Activated CD8-positive, alpha-beta T cell treated with anti-CD3 and anti-CD28 coated beads, Interleukin-2, amount 10 ng/mL, durations not matched to agents 7 days and 5 days (primary cell): ENCODE measurements at regions of chr11 and their contacts with region 1.

Region 1: GRCh38 chr11:93529707-93530467 is 13.3 kb downstream of the SMCO4 start:
- DNase-seq: no peak
- ATAC-seq: peak; percentile 37
- H3K4me3 Mint-ChIP-seq: no peak overlapping the region
- H3K27ac Mint-ChIP-seq: peak overlapping the region; percentile 71
- H3K4me1 Mint-ChIP-seq: peaks cover 79% of the 10 kb centered on the region
- H3K27me3 Mint-ChIP-seq: no peaks in the 10 kb centered on the region

Region 2: GRCh38 chr11:93543292-93543977 is 13.5 kb after region 1 on chr11 and contains the start of gene SMCO4:
- CTCF ChIA-PET with region 1: interaction called, 16 read pairs
- POLR2A ChIA-PET with region 1: interaction called, 7 read pairs
- DNase-seq: peak; percentile 71
- ATAC-seq: peak; percentile 90
- H3K4me3 Mint-ChIP-seq: peak within 1 kb of the TSS; percentile 87
- H3K27ac Mint-ChIP-seq: peak within 1 kb of the TSS; percentile 83
- H3K4me1 Mint-ChIP-seq: peaks cover 22% of the 10 kb centered on the region
- H3K27me3 Mint-ChIP-seq: peaks cover 29% of the 10 kb centered on the region
- total RNA-seq, gene SMCO4: 17.7 to 18.0 TPM